ENCODE measurements at regions of chr3 and their contacts with region 1.

Region 1: DNA sequence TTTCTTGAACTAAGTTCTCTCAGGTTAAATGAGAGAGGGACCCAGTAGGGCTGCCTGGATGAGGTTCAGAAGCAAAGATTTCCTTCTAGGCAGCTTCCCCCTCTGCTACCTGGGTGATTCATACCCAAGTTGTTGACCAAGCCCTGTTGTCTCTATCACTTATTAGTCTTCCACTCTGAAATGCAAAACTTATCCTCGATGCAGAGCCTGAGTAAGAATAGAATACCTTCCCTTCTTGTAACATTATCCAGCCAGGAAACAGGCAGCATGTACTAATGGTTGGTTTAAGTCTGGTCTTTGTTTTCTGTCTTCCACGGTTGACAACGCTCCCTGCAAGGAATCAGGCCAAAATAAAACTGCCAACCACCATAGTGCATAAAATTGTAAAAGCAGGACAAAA is 377.3 kb downstream of the MECOM start:
- DNase-seq: no peak
- ATAC-seq: no peak
- H3K4me3 ChIP-seq: no peak overlapping the region
- H3K27ac ChIP-seq: peak overlapping the region in 5 of 12 donors; percentile 9 to 39 (median 20)
- H3K4me1 ChIP-seq: peaks cover 0 to 18% (median 6%) of the 10 kb centered on the region in 12 donors
- H3K27me3 ChIP-seq: no peaks in the 10 kb centered on the region
- CTCF ChIP-seq: no peak
- POLR2A ChIP-seq: no peak

Region 2: GRCh38 chr3:169227911-169228310 is 58.3 kb before region 1 on chr3:
- intact Hi-C with region 1: loop called in 2 of 10 experiments (anchors 10 kb)
- DNase-seq: peak in 1 of 5 donors; percentile 30
- ATAC-seq: peak in 3 of 4 donors; percentile 75 to 83 (median 80)
- H3K4me3 ChIP-seq: peak overlapping the region in 6 of 12 donors; percentile 2 to 20 (median 4)
- H3K27ac ChIP-seq: peak overlapping the region in 8 of 12 donors; percentile 5 to 54 (median 18)
- H3K4me1 ChIP-seq: peaks cover 0 to 20% (median 7%) of the 10 kb centered on the region in 12 donors
- H3K27me3 ChIP-seq: peaks cover 0 to 4% (median 0%) of the 10 kb centered on the region in 9 donors
- CTCF ChIP-seq: no peak
- POLR2A ChIP-seq: no peak

Measured in heart left ventricle (tissue), 16 donors.